Mammary epithelial cell (primary cell): ENCODE measurements at regions of chr17 and their contacts with region 1.

Region 1: DNA sequence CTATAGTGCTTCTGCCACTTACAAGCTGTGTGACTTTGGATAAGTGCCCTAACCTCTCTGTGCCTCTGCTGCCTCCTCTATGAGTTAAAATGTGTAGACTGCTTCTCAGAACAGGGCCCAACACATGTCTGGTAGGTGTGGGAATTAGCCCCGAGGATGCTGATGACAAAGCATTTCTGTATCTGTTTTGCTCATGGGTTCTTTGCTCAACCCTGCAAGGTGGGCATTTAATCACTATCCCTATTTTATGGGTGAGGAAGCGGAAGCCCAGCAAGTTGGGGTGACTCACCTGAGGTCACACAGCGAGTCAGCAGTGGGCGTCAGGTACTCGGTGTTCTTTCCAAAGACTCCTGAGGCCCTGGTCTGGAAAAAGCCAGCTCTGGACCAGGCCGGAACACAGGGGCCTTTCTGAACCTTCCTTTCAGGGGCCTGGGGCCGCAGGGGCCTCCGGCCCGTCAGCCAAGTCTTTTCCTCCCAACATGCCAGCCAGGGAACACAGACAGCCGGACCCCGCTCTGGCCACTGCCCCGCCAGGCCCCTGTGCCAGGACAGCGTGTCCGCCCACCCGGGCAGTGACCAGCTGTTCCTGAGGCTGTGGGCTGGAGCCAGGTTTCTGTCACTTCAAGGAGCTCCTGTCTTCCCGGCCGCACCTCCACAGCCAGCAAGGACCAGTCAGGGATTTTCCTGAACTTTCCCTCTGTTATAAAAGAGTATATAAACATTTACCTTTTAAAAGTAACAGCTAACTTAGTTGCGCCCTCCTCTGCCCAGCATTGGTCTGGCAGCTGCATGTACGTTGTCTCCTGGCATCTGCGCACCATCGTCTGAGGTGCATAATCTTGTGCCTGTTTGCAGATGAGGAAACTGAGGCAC is 62.5 kb downstream of the SREBF1 start:
- DNase-seq: peak; percentile 97
- H3K4me3 ChIP-seq: peak overlapping the region in 1 of 3 experiments; percentile 19
- H3K27ac ChIP-seq: peak overlapping the region; percentile 98
- H3K4me1 ChIP-seq: peaks cover 23% of the 10 kb centered on the region
- H3K27me3 ChIP-seq: no peaks in the 10 kb centered on the region
- CTCF ChIP-seq: peak; percentile 67 to 77

Region 2: GRCh38 chr17:17739388-17740066 is 34.7 kb before region 1 on chr17:
- CTCF ChIA-PET with region 1: no interaction called
- dilution Hi-C with region 1: loop called (anchors 5 kb)
- in situ Hi-C with region 1: no loop called
- intact Hi-C with region 1: loop called (anchors 1 kb)
- DNase-seq: peak; percentile 42
- H3K4me3 ChIP-seq: no peak overlapping the region
- H3K27ac ChIP-seq: peak overlapping the region; percentile 80
- H3K4me1 ChIP-seq: peaks cover 55% of the 10 kb centered on the region
- H3K27me3 ChIP-seq: no peaks in the 10 kb centered on the region
- CTCF ChIP-seq: no peak

Region 3: GRCh38 chr17:17752089-17752820 is 22.0 kb before region 1 on chr17:
- CTCF ChIA-PET with region 1: no interaction called
- dilution Hi-C with region 1: no loop called
- in situ Hi-C with region 1: no loop called
- intact Hi-C with region 1: loop called (anchors 2 kb)
- DNase-seq: peak; percentile 93
- H3K4me3 ChIP-seq: peak overlapping the region; percentile 30 to 53 (median 49)
- H3K27ac ChIP-seq: peak overlapping the region; percentile 82
- H3K4me1 ChIP-seq: peaks cover 58% of the 10 kb centered on the region
- H3K27me3 ChIP-seq: no peaks in the 10 kb centered on the region
- CTCF ChIP-seq: peak; percentile 16 to 32